Aorta (tissue), 5 donors: ENCODE measurements at regions of chr6 and their contacts with region 1.

Region 1: DNA sequence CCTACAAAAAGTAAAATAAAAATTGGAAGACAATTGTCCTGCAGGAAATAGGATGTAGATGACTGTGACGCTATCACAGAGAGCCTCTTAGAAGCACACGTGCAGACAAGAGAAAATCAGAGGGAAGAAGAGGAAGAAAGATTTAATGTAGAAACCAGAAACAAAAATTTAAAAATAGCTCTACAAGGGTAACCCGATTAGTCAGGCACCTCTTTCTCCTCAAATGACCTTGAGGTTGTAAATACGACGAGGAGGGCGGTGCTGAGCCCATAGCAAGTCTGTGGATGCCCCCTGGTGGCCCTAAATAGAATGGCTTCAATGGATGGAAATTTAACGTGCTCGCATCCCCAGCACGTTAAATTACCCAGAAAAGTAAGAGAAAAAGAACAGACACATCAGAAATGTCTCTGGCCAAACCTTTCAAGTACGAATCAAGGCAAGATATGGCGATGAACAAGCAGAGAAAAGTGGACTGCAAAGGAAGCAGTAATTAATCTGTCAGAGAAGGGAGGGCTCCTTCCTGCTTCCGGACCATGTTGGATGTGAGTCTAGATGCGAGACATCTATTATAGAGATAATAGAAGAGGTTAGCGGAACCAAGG is 4.2 kb upstream of the PRPH2 start:
- DNase-seq: peak; percentile 79 to 81
- ATAC-seq: peak; percentile 96
- H3K4me3 ChIP-seq: peak overlapping the region; percentile 38 to 72
- H3K27ac ChIP-seq: peak overlapping the region; percentile 14 to 39
- H3K4me1 ChIP-seq: peaks cover 0 to 4% of the 10 kb centered on the region in 2 donors
- H3K27me3 ChIP-seq: no peaks in the 10 kb centered on the region

Region 2: GRCh38 chr6:42661540-42662153 is 64.9 kb before region 1 on chr6:
- intact Hi-C with region 1: loop called (anchors 1 to 2 kb)
- DNase-seq: peak; percentile 82 to 90
- ATAC-seq: peak; percentile 90
- H3K4me3 ChIP-seq: no peak overlapping the region
- H3K27ac ChIP-seq: no peak overlapping the region
- H3K4me1 ChIP-seq: no peaks in the 10 kb centered on the region
- H3K27me3 ChIP-seq: no peaks in the 10 kb centered on the region

Region 3: GRCh38 chr6:42692137-42692911 is 34.3 kb before region 1 on chr6:
- intact Hi-C with region 1: loop called in 1 of 2 experiments (anchors 5 kb)
- DNase-seq: no peak
- ATAC-seq: no peak
- H3K4me3 ChIP-seq: no peak overlapping the region
- H3K27ac ChIP-seq: peak overlapping the region in 1 of 2 donors; percentile 47
- H3K4me1 ChIP-seq: no peaks in the 10 kb centered on the region
- H3K27me3 ChIP-seq: no peaks in the 10 kb centered on the region